Prostate gland (tissue), 2 donors: ENCODE measurements at regions of chr5 and their contacts with region 1.

Region 1: DNA sequence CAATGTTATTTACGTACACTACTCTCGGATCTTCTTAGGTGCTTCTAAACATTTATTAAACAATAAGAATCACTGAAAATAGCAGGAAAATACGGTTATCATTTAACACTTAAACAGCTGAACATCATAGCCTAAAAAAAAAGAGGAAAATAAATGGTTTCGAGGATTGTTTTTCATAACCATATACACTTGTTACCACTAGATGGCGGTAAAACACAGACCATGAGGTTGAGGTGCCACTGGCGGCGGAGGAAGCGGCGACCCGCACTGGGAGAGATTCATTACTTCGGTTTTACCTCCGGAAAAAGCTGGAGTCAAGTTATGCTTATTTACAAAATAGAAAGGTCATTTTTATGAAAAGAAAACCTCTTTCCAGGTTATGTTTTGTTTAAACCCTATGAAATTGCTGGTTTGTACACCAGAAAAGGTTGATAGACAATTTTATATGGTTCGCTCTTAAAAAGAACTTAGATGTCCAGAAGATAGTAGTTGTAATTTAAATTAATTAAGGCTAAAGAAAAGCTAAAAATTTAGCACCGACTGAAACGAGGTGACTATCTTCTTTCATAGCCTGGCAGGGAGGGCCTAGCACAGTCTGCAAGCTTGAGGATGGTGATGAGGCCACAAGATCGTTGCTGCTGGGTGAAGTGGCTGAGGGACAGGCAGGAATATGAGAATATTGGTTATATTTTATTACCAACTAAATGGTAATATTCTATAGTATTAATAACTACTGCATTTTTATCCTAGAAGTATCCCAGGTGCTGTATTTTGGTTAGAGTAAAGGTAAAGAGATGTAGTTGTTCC is 605.7 kb downstream of the RAB3C start:
- DNase-seq: peak; percentile 65
- H3K4me3 ChIP-seq: no peak overlapping the region
- H3K27ac ChIP-seq: peak overlapping the region; percentile 5 to 38
- H3K4me1 ChIP-seq: no peaks in the 10 kb centered on the region
- H3K27me3 ChIP-seq: no peaks in the 10 kb centered on the region
- CTCF ChIP-seq: peak; percentile 87 to 95 (median 88)
- POLR2A ChIP-seq: no peak

Region 2: GRCh38 chr5:58886315-58887207 is 302.1 kb before region 1 on chr5:
- intact Hi-C with region 1: no loop called
- DNase-seq: peak; percentile 58
- H3K4me3 ChIP-seq: no peak overlapping the region
- H3K27ac ChIP-seq: no peak overlapping the region
- H3K4me1 ChIP-seq: no peaks in the 10 kb centered on the region
- H3K27me3 ChIP-seq: no peaks in the 10 kb centered on the region
- CTCF ChIP-seq: peak; percentile 79 to 87 (median 83)
- POLR2A ChIP-seq: no peak

Region 3: DNA sequence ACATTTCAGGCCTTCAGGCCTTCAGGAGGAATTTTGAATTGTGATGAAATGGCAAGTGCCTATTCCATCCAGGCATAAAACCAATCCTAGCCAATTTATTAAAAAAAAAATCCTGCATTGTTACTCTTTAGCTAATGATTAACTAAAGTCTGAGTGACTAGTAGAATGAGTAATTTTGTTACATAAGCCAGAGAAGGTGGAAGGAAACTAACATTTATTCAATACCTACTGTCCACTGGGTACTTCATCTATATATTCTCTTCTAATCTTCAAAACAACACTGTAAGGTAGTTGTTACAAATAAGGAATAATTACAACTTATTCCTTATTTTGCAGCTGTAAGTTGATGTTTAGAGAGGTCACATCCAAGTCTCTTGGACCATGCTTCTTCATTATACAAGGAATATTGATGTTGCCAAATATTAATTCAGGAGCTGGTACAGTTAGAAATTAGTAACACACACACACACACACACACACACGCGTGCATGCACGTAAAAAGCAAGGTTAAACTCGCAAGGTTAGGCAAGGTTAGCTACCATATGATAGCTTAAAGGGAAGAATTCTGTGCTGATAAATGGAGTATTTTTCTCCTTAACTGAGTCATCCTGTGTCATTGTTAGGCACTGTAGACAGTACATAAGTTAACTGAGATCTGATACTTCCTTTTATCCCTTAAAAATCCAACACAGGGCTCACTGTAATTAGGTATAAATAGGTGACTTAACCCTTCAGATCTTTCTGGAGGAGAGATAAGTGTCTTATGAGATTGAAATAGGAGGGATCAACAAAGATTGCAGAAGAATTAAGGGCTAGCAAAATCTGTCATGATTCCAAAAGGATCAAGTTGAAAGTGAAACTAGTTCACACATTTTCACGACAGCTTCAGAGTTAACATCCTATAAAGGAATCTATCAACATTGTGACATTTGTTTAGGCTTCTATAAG is 108.0 kb after region 1 on chr5:
- intact Hi-C with region 1: no loop called
- DNase-seq: no peak
- H3K4me3 ChIP-seq: peak overlapping the region in 1 of 2 donors; percentile 6
- H3K27ac ChIP-seq: peak overlapping the region; percentile 25 to 55
- H3K4me1 ChIP-seq: no peaks in the 10 kb centered on the region
- H3K27me3 ChIP-seq: no peaks in the 10 kb centered on the region
- CTCF ChIP-seq: no peak
- POLR2A ChIP-seq: no peak

Region 4: DNA sequence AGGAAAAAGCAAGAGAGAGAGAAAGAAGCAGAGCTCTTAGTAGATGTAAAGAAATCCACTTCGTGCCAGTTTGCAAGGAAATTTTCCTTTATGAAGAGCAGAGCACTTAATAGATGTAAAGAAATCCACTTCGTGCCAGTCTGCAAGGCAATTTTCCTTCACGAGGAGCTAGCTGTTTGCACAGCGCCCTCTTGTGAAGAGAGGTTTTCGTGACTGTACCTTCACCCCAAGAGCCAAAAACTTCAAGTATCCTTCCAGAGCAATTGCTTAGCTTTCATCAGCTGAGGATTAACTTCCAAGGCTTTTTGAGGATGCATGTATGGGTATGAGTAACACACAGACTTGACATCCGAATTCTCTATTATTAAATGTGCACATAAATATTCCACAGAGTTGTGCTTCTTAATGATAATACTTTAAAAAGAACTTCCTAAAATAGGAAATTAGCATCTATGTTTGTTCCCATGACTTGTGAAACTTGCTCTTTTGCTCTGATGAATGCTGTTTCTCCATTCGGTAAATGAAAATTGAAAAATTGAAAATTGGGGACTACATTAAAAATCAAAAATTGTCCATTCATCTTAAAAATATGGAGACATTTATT is 179.3 kb after region 1 on chr5:
- intact Hi-C with region 1: loop called (anchors 5 kb)
- DNase-seq: peak; percentile 63
- H3K4me3 ChIP-seq: no peak overlapping the region
- H3K27ac ChIP-seq: no peak overlapping the region
- H3K4me1 ChIP-seq: no peaks in the 10 kb centered on the region
- H3K27me3 ChIP-seq: no peaks in the 10 kb centered on the region
- CTCF ChIP-seq: peak in 3 of 4 experiments; percentile 61 to 69 (median 62)
- POLR2A ChIP-seq: no peak

Region 5: DNA sequence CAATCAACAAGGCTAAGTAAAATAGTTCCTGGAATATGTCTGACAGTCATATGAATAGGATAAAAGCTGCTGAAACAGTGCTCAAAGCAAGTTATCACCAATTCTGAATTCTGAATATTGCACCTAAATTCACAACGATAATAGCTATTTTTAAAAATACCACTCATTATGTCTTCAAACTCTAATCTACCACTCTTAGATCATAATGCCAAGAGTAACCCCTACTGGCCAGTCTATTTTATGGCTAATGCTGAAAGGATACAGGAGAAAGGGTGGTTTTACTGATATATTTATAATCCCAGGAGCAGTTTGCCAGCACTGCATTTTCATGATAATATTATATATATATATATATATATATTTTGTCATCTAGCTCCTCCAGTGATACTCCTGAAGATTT is 472.1 kb after region 1 on chr5:
- intact Hi-C with region 1: loop called (anchors 10 kb)
- DNase-seq: no peak
- H3K4me3 ChIP-seq: no peak overlapping the region
- H3K27ac ChIP-seq: no peak overlapping the region
- H3K4me1 ChIP-seq: no peaks in the 10 kb centered on the region
- H3K27me3 ChIP-seq: no peaks in the 10 kb centered on the region
- CTCF ChIP-seq: peak in 2 of 4 experiments; percentile 23 to 36
- POLR2A ChIP-seq: no peak